ENCODE measurements at regions of chr1 and their contacts with region 1.

Region 1: DNA sequence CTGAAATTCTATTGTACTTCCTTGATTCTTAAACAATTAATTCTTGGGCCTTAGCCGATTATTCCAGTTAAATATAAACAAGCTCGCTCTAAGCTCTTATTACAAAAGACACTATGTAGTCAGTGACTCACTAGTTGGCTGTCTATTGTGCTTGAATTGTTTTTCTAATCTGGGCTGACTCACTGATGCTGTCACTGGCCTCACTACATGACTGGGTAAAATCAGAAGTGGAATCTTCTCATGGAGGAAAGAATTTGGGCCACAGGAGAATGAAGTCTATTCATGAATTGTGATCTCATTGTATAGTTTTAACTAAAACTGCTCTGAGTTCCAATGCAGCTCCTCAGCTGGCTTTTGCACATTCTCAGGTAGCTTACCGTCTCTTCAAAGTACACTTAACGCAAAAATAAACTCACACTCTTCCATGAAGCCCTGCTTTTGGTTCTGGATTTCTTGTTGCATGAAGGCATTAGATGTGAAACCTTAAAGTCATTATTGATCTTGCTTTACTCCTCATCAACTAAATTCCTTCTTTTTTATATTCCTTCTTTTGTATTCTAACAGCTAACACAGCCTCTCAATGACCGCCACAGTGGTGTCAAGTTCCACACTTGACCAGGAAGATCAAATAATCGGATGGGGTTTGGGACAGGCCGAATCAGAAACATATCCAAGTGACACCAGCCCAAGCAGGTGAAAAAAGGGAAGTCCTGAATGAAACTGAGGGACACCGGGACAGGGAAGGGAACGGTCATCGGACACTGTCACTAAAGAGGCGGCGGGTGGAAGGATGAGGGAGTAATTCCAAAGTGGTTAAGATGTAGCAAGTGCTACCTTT is 80.9 kb upstream of the LBR start:
- DNase-seq: peak; percentile 99
- H3K4me3 Mint-ChIP-seq: no peak overlapping the region
- H3K27ac Mint-ChIP-seq: peak overlapping the region; percentile 83
- H3K4me1 Mint-ChIP-seq: peaks cover 32% of the 10 kb centered on the region
- H3K27me3 Mint-ChIP-seq: no peaks in the 10 kb centered on the region
- CTCF ChIP-seq: no peak

Region 2: DNA sequence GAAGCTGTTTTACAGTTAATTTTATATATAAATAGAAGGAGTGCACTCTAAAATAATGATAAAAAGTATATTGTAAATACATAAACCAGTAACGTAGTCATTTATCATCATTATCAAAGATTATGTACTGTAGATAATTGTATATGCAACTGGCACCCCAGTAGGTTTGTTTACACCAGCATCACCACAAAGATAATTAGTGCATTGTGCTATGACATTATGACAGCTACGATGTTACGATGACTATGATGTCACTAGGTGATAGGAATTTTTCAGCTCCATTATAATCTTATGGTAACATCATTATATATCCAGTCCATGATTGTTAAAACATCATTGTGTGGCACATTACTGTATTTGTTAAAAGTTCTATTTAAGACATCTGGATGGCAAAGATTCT is 266.1 kb before region 1 on chr1:
- CTCF ChIA-PET with region 1: no interaction called
- POLR2A ChIA-PET with region 1: no interaction called
- intact Hi-C with region 1: no loop called
- DNase-seq: no peak
- H3K4me3 Mint-ChIP-seq: no peak overlapping the region
- H3K27ac Mint-ChIP-seq: no peak overlapping the region
- H3K4me1 Mint-ChIP-seq: no peaks in the 10 kb centered on the region
- H3K27me3 Mint-ChIP-seq: no peaks in the 10 kb centered on the region
- CTCF ChIP-seq: no peak

Region 3: GRCh38 chr1:225480825-225481434 is 27.8 kb before region 1 on chr1:
- CTCF ChIA-PET with region 1: interaction called, 23 read pairs
- POLR2A ChIA-PET with region 1: interaction called, 27 read pairs
- intact Hi-C with region 1: no loop called
- DNase-seq: peak; percentile 85
- H3K4me3 Mint-ChIP-seq: no peak overlapping the region
- H3K27ac Mint-ChIP-seq: no peak overlapping the region
- H3K4me1 Mint-ChIP-seq: peaks cover 7% of the 10 kb centered on the region
- H3K27me3 Mint-ChIP-seq: peaks cover 15% of the 10 kb centered on the region
- CTCF ChIP-seq: peak; percentile 100

Region 4: GRCh38 chr1:225526878-225527277 is 18.1 kb after region 1 on chr1:
- CTCF ChIA-PET with region 1: interaction called, 6 read pairs
- POLR2A ChIA-PET with region 1: interaction called, 71 read pairs
- intact Hi-C with region 1: no loop called
- DNase-seq: peak; percentile 56
- H3K4me3 Mint-ChIP-seq: no peak overlapping the region
- H3K27ac Mint-ChIP-seq: no peak overlapping the region
- H3K4me1 Mint-ChIP-seq: peaks cover 5% of the 10 kb centered on the region
- H3K27me3 Mint-ChIP-seq: no peaks in the 10 kb centered on the region
- CTCF ChIP-seq: no peak

Region 5: DNA sequence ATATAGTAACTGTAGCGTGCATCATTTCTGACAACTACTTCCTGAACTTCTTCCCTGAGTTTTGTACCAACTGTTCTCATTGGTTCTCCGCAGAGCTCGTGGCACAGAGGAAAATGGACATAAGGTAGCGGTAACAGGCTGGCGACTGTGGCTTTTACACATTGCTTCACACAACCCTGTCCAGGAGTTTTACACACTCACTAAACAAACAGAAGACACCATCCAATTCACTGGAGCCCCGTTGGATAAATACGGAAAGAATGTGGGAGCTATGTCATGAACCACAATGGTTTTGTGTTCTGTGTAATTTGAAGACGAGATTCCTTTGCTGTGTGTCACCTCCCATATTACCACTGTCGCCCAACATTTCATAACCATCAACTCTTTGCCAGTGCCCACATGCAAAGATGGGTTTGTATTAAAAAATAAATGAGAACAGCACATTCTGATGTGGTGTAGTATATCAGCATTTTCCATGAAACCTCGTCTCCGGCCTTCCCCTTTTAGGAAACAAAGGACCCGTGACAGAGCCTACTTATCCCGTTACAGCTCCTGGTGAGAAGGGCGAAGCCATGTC is 191.5 kb after region 1 on chr1:
- CTCF ChIA-PET with region 1: no interaction called
- POLR2A ChIA-PET with region 1: interaction called, 15 read pairs
- intact Hi-C with region 1: no loop called
- DNase-seq: peak; percentile 100
- H3K4me3 Mint-ChIP-seq: peak overlapping the region; percentile 68
- H3K27ac Mint-ChIP-seq: peak overlapping the region; percentile 94
- H3K4me1 Mint-ChIP-seq: peaks cover 26% of the 10 kb centered on the region
- H3K27me3 Mint-ChIP-seq: no peaks in the 10 kb centered on the region
- CTCF ChIP-seq: no peak

Region 6: DNA sequence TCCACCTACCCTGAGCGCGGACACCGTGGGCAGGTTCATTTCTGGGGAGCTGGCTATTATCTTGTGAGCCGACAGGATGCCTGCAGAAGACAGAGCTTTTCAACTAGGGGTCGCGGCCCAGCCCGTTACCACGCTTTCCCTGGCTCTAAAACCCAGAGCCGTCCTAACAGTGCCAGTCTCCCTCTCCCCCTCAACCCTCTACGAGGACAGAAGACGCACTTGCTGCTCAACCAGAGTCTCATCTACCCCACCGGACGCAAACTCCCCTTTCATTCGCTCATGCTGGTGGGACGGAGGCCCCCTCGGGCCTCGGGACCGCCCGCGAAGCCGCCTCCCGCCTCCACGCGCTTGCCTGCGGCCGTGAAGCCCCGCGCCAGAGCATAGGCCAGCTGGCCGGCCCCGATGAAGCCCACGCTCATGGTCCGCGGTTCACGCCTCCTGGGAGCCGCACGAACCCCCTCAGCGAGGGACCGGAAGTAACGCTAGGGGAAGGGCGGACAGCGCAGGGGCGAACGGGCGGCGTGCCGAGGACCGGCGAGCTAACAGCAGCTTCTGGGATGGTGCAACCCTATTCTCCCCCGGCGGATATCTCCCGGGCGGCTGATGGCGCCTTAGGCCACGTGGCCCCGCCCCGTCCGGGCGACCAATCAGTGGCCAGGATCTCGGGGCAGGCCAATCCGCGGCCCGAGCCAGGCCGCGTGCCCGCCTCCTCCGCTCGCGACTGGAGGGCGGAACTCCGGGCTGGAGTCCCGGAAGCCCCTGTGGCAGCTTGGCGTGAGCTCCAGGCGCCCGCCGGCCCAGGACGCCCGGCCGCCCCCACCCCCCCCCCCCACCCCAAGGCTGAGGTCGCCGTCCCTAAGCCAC is 415.2 kb after region 1 on chr1 and contains the start of gene PYCR2:
- CTCF ChIA-PET with region 1: no interaction called
- POLR2A ChIA-PET with region 1: interaction called, 23 read pairs
- intact Hi-C with region 1: no loop called
- DNase-seq: peak; percentile 99
- H3K4me3 Mint-ChIP-seq: peak within 1 kb of the TSS; percentile 99
- H3K27ac Mint-ChIP-seq: peak within 1 kb of the TSS; percentile 95
- H3K4me1 Mint-ChIP-seq: peaks cover 42% of the 10 kb centered on the region
- H3K27me3 Mint-ChIP-seq: no peaks in the 10 kb centered on the region
- CTCF ChIP-seq: no peak
- total RNA-seq, gene PYCR2: 172 and 173 TPM in 2 replicates